HEK293 (cell line): ENCODE measurements at regions of chr12 and their contacts with region 1.

Region 1: DNA sequence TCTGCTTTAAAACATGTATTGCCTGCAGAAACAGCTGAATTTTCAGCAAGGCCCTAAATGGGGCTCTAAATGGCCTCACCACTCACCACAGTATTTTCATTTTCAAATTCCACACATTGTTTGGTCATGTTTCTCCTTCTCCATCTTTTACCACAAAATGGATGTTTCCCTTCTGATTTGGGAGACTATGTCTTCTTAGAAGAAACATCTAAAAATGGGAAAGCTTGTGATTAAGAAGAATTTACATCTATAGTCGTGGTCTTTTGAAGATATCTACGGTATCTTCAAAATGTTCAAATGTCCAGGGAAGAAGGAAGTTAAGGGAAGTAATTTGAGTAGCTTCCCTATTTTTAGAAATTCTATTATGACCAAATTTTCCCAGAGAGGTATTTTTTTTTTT is 20.7 kb upstream of the TUBA1C start:
- H3K4me3 ChIP-seq: no peak overlapping the region
- H3K27ac ChIP-seq: no peak overlapping the region
- H3K4me1 ChIP-seq: no peaks in the 10 kb centered on the region
- CTCF ChIP-seq: no peak

Region 2: GRCh38 chr12:49232940-49233841 is 11.0 kb before region 1 on chr12:
- CTCF ChIA-PET with region 1: interaction called, 19 read pairs
- POLR2A ChIA-PET with region 1: no interaction called
- H3K4me3 ChIP-seq: no peak overlapping the region
- H3K27ac ChIP-seq: peak overlapping the region; percentile 6; the same call in 1 of the 2 replicates
- H3K4me1 ChIP-seq: peaks cover 2% of the 10 kb centered on the region; the same call in 1 of the 2 replicates
- CTCF ChIP-seq: peak; percentile 54; the same call in 1 of the 2 replicates